ENCODE measurements at regions of chr18 and their contacts with region 1.

Region 1: DNA sequence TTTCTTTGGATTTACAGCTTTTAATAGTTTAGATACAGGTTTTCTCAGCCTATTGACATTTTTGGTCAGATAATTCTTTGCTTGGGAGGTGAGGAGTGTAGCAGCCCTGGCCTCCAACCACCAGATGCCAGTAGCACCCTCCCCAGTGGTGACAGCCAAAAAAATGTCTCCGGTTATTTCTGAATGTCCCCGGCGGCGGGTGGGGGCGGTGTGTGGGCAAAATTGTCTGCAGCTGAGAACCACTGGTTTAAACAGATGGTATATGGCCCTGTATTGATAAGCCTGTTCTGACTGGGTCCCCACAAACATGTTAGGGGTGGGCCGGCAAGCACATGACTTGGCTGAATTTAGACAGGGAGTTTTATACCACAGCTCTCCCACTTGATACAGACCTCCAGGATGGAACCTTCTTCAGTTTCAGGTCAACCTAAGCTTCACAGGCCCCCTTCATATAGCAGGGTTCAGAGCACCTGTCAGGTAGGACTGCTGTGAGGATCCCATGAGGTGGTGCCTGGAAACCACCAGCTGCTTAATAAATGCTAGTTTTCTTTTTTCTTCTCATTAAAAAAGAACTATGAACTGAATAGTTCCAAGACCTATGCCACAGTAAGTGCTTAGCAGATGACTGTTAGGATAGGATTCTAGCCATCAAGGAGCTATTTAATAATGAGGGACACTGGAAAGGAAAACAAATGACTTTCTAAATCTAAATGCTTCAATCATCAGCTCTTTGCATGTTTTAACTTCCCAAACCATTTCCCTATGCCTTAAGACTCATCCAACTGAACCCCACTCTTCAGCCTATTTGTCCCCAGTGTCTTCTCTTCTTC is 18.1 kb downstream of the LPIN2 start:
- DNase-seq: peak; percentile 85 to 95 (median 94)
- H3K4me3 ChIP-seq: peak overlapping the region in 3 of 7 experiments; percentile 27 to 54 (median 45)
- H3K27ac ChIP-seq: peak overlapping the region; percentile 12 to 73
- H3K4me1 ChIP-seq: peaks cover 10 to 38% (median 22%) of the 10 kb centered on the region in 4 experiments
- H3K27me3 ChIP-seq: no peaks in the 10 kb centered on the region

Region 2: GRCh38 chr18:2932247-2933181 is 62.3 kb before region 1 on chr18:
- CTCF ChIA-PET with region 1: interaction called, 13 read pairs
- POLR2A ChIA-PET with region 1: no interaction called
- DNase-seq: peak; percentile 68 to 88 (median 79)
- H3K4me3 ChIP-seq: no peak overlapping the region
- H3K27ac ChIP-seq: no peak overlapping the region
- H3K4me1 ChIP-seq: peaks cover 0 to 7% (median 0%) of the 10 kb centered on the region in 4 experiments
- H3K27me3 ChIP-seq: no peaks in the 10 kb centered on the region

Region 3: GRCh38 chr18:2971741-2972552 is 22.9 kb before region 1 on chr18:
- CTCF ChIA-PET with region 1: interaction called, 25 read pairs
- POLR2A ChIA-PET with region 1: no interaction called
- DNase-seq: peak in 2 of 3 donors; percentile 81 to 87
- H3K4me3 ChIP-seq: peak overlapping the region in 6 of 7 experiments; percentile 8 to 73 (median 60)
- H3K27ac ChIP-seq: peak overlapping the region; percentile 41 to 86
- H3K4me1 ChIP-seq: peaks cover 42 to 72% (median 59%) of the 10 kb centered on the region in 4 experiments
- H3K27me3 ChIP-seq: no peaks in the 10 kb centered on the region

Region 4: DNA sequence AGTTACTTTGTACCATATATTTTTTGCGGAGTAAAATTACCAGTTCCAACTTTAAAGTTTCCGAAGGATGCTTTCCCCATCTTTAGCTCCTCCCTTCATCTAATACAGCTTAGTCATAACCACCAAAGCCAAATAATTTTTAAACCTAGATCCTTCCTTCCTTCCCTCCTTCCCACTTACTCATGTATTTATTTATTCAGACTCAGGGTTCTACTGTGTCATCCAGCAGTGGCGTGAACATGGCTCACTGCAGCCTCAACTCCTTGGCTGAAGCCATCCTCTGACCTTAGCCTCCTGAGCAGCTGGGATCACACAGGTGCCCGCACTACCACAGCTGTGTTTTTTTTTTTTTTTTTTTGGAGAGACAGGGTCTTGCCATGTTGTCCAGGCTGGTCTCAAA is 13.7 kb after region 1 on chr18:
- CTCF ChIA-PET with region 1: interaction called, 42 read pairs
- POLR2A ChIA-PET with region 1: interaction called, 4 read pairs
- DNase-seq: peak in 2 of 3 donors; percentile 58 to 59
- H3K4me3 ChIP-seq: no peak overlapping the region
- H3K27ac ChIP-seq: no peak overlapping the region
- H3K4me1 ChIP-seq: peaks cover 8 to 41% (median 29%) of the 10 kb centered on the region in 4 experiments
- H3K27me3 ChIP-seq: no peaks in the 10 kb centered on the region

Region 5: GRCh38 chr18:3055818-3056217 is 61.0 kb after region 1 on chr18:
- CTCF ChIA-PET with region 1: interaction called, 129 read pairs
- POLR2A ChIA-PET with region 1: no interaction called
- DNase-seq: no peak
- H3K4me3 ChIP-seq: no peak overlapping the region
- H3K27ac ChIP-seq: no peak overlapping the region
- H3K4me1 ChIP-seq: peaks cover 14 to 29% (median 21%) of the 10 kb centered on the region in 4 experiments
- H3K27me3 ChIP-seq: no peaks in the 10 kb centered on the region

Region 6: GRCh38 chr18:3074087-3074486 is 79.3 kb after region 1 on chr18:
- CTCF ChIA-PET with region 1: interaction called, 11 read pairs
- POLR2A ChIA-PET with region 1: no interaction called
- DNase-seq: no peak
- H3K4me3 ChIP-seq: no peak overlapping the region
- H3K27ac ChIP-seq: no peak overlapping the region
- H3K4me1 ChIP-seq: peaks cover 0 to 4% (median 0%) of the 10 kb centered on the region in 4 experiments
- H3K27me3 ChIP-seq: no peaks in the 10 kb centered on the region

Region 7: DNA sequence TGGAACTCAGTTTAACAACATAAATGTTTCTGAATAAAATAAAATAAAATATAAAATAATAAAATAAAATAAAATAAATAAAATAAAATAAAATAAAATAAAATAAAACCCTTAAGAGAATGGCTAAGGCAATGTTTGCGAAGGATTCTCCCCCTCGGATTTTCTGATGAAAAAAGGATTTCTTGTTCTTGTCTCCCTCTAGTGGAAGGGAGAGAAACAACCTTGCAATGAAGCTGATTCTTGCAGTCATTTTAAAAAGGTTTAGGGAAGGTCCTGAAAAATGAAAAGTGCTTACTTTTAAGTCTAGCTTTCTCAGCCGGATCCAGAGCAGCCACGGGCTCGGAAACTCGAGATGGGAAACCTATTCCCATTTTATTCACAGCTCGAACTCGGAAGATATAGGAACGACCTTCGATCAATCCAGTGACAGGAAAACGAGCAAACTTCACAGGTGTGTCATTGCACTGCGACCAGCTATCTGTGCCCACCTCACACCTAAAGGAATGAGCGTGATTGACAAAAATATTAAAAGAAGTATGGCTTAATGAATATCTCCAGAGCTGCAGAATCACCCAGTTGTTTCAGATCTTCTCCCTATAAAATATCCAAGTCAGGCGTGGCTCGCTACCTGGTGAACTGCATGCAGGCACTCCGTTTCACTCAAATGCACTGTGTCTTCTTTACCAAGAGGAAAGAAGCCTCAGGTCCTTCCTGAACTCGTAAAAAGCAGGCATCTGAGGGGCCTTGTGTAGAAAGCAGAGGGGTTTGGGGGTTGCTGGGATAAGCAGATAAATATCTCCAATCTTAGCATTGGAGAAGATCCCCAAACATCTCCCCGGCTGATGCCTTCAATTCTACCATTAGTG is 156.8 kb after region 1 on chr18:
- CTCF ChIA-PET with region 1: interaction called, 14 read pairs
- POLR2A ChIA-PET with region 1: no interaction called
- DNase-seq: peak; percentile 49 to 79 (median 76)
- H3K4me3 ChIP-seq: no peak overlapping the region
- H3K27ac ChIP-seq: no peak overlapping the region
- H3K4me1 ChIP-seq: no peaks in the 10 kb centered on the region
- H3K27me3 ChIP-seq: no peaks in the 10 kb centered on the region

Region 8: DNA sequence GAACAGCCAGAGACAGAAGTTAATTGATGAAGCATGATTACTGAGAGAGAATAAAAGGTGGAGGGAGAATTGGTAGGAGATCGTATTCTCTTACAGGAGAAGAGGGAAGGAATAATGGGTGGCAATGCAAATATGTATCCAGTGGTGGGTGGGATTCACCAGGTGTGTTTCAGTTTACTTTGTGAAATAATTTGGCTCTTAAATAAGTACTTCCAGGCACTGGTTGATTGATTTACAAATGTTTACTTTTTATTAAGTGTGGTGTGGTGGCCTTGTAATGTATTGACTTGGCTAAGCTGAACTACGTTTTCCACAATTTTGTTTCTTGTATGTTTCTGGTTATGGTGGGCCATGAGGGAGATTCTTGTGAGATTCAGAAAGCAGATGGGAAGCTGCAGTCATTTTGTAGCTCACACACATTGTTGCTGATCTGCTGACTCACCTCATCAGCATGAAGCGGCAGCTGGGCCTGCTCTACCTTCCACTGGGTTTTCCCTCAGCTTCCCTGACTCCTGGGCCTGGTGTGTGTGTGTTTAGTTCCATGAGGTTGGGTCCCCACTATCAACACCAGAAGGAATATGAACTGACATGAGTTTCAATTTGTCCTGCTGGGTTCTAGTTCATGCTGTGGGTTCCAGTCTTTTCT is 299.7 kb after region 1 on chr18:
- CTCF ChIA-PET with region 1: no interaction called
- POLR2A ChIA-PET with region 1: no interaction called
- DNase-seq: no peak
- H3K4me3 ChIP-seq: no peak overlapping the region
- H3K27ac ChIP-seq: no peak overlapping the region
- H3K4me1 ChIP-seq: peaks cover 3 to 9% (median 8%) of the 10 kb centered on the region in 4 experiments
- H3K27me3 ChIP-seq: no peaks in the 10 kb centered on the region